ENCODE measurements at regions of chr3 and their contacts with region 1.

Region 1: GRCh38 chr3:105518806-105519418 is 152.2 kb downstream of the ALCAM start:
- DNase-seq: peak; percentile 22 to 57
- H3K4me3 ChIP-seq: no peak overlapping the region
- H3K27ac ChIP-seq: no peak overlapping the region
- H3K4me1 ChIP-seq: peaks cover 8% of the 10 kb centered on the region
- H3K27me3 ChIP-seq: no peaks in the 10 kb centered on the region
- CTCF ChIP-seq: peak; percentile 95

Region 2: GRCh38 chr3:104102386-104102785 is 1416.5 kb before region 1 on chr3:
- CTCF ChIA-PET with region 1: no interaction called
- POLR2A ChIA-PET with region 1: no interaction called
- intact Hi-C with region 1: loop called (anchors 10 kb)
- DNase-seq: peak in 1 of 2 experiments; percentile 21
- H3K4me3 ChIP-seq: no peak overlapping the region
- H3K27ac ChIP-seq: no peak overlapping the region
- H3K4me1 ChIP-seq: no peaks in the 10 kb centered on the region
- H3K27me3 ChIP-seq: no peaks in the 10 kb centered on the region
- CTCF ChIP-seq: peak; percentile 85

Region 3: DNA sequence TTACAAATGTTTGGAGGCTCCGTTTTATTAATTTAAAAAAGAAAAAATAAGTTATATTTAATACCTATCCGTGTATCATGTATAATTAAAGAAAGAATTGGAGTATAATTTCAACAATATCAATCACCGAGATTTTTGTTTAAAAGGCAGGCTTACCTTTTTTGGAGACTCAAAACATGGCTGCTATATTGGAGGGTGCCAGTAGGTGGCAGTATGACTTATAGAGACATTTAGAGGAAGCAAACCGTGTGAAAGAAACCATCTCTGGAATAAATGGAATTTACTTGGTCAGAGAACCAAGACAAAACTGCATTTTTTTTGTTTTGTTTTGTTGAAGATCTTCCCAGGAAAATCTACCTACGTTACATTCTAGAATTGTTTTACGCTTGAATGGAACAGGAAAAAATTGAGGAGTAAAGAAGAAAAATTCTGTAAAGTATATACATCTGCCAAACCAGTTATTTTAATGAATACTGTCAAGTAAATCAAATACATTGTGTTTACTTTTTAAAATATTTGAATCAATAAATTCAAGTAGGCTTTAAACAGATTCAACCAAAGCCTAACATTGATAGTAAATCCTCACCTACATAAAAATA is 954.8 kb before region 1 on chr3:
- CTCF ChIA-PET with region 1: no interaction called
- POLR2A ChIA-PET with region 1: no interaction called
- intact Hi-C with region 1: loop called (anchors 10 kb)
- DNase-seq: peak; percentile 41 to 66
- H3K4me3 ChIP-seq: no peak overlapping the region
- H3K27ac ChIP-seq: no peak overlapping the region
- H3K4me1 ChIP-seq: no peaks in the 10 kb centered on the region
- H3K27me3 ChIP-seq: no peaks in the 10 kb centered on the region
- CTCF ChIP-seq: peak; percentile 96

Region 4: DNA sequence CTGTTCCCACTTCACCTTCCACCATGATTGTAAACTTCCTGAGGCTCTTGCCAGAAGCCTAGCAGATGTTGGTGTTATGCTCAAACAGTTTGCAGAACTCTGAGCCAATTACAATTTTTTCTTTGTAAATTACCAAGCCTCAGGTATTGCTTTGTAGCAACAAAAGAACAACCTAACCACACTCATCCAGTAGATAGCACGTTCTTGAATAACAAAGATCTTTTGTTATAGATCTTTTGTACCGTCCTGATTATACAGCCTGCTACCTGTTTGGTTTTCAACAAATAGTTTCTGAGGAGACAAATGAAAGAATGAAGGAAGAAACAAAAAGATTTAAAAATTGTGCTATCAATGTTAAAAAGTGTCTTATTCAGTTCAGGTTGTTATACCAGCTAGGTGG is 626.9 kb before region 1 on chr3:
- CTCF ChIA-PET with region 1: no interaction called
- POLR2A ChIA-PET with region 1: no interaction called
- intact Hi-C with region 1: loop called (anchors 10 kb)
- DNase-seq: no peak
- H3K4me3 ChIP-seq: no peak overlapping the region
- H3K27ac ChIP-seq: no peak overlapping the region
- H3K4me1 ChIP-seq: no peaks in the 10 kb centered on the region
- H3K27me3 ChIP-seq: no peaks in the 10 kb centered on the region
- CTCF ChIP-seq: no peak

Region 5: DNA sequence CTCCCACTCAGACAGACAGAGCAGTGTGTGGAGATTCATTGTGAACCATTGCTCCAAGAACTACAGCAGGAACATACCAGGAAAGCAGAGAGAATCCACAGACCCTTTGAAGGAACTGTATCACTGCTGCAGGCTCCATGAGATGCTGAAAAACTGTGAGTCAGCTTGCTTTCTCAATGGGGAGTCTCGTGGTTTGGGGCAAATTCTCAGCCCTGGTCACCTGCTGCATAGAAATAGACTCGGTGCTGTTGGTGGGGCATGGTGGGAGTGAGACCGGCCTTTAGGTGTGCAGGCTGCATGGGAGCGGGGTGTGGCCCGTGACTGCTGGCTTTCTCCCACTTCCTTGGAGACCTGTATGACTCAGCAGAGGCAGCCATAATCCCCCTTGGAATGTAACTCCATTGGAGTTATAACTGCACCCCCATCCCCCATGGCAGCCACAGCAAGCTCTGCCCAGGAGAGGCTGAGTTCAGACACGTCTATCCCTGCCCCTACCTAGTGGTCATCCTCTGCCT is 116.6 kb before region 1 on chr3:
- CTCF ChIA-PET with region 1: interaction called, 3 read pairs
- POLR2A ChIA-PET with region 1: no interaction called
- intact Hi-C with region 1: loop called (anchors 1 kb)
- DNase-seq: peak; percentile 93 to 98
- H3K4me3 ChIP-seq: peak overlapping the region; percentile 40; the same call in 1 of the 2 replicates
- H3K27ac ChIP-seq: peak overlapping the region; percentile 91
- H3K4me1 ChIP-seq: peaks cover 30% of the 10 kb centered on the region
- H3K27me3 ChIP-seq: no peaks in the 10 kb centered on the region
- CTCF ChIP-seq: no peak

Region 6: GRCh38 chr3:105495021-105495420 is 23.9 kb before region 1 on chr3:
- CTCF ChIA-PET with region 1: no interaction called
- POLR2A ChIA-PET with region 1: no interaction called
- intact Hi-C with region 1: no loop called
- DNase-seq: no peak
- H3K4me3 ChIP-seq: no peak overlapping the region
- H3K27ac ChIP-seq: no peak overlapping the region
- H3K4me1 ChIP-seq: no peaks in the 10 kb centered on the region
- H3K27me3 ChIP-seq: no peaks in the 10 kb centered on the region
- CTCF ChIP-seq: no peak

Region 7: DNA sequence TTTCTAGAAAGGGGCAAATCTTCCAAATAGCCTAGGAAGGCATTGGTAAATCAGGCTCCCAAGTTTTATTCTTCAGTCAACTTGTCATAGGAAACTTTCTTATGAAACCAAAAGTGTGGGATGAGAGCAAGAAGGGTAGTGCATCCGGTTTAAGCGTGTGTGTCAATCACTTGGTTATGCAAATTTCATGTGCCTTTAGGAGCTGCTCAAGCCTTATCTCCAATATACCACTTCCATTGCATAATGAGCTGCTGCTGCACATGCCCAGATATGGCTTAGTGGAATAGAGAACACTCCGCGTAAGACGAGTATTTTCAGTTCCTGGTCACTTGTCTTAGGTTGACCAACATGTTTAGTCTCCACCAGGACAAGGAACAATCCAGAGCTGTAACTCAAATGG is 107.8 kb after region 1 on chr3:
- CTCF ChIA-PET with region 1: no interaction called
- POLR2A ChIA-PET with region 1: no interaction called
- intact Hi-C with region 1: no loop called
- DNase-seq: no peak
- H3K4me3 ChIP-seq: no peak overlapping the region
- H3K27ac ChIP-seq: no peak overlapping the region
- H3K4me1 ChIP-seq: no peaks in the 10 kb centered on the region
- H3K27me3 ChIP-seq: no peaks in the 10 kb centered on the region
- CTCF ChIP-seq: no peak

Region 8: GRCh38 chr3:107064445-107065060 is 1545.6 kb after region 1 on chr3:
- CTCF ChIA-PET with region 1: no interaction called
- POLR2A ChIA-PET with region 1: no interaction called
- intact Hi-C with region 1: loop called (anchors 10 kb)
- DNase-seq: peak; percentile 57 to 71
- H3K4me3 ChIP-seq: no peak overlapping the region
- H3K27ac ChIP-seq: no peak overlapping the region
- H3K4me1 ChIP-seq: no peaks in the 10 kb centered on the region
- H3K27me3 ChIP-seq: no peaks in the 10 kb centered on the region
- CTCF ChIP-seq: peak; percentile 98